GM13977 (cell line): ENCODE measurements at regions of chr20 and their contacts with region 1.

Region 1: DNA sequence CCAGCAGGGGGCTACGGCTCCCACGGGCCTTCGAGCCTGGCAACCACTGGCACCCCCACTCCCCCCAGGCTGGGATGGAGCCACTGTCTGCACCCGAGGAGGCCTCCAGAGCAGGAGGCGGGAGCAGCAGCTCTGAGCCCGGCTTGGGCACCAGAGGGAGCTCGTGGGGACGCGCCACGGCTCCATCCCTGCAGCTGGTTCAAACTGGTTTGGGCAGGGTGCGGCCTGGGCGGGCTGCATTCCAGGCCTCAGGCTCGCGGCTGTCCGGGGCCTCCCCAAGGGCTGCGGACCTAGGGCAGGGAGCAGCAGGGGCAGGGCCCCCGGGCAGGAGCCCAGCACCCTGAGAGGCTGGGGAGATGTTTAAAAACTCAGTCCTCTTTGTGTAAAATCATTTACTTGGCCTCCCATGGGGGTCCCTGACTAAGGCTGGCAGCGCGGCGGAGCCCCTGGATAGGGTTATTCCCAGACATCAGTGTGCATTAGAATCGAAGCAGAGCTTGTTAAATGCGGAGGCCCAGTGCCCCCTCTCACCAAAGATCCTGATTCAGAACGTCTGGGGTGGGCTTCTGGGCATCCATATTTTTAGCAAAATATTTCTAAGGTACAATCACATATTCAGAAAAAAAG is 4.1 kb upstream of the BCAS4 start:
- DNase-seq: peak; percentile 89
- CTCF ChIP-seq: peak; percentile 90

Region 2: DNA sequence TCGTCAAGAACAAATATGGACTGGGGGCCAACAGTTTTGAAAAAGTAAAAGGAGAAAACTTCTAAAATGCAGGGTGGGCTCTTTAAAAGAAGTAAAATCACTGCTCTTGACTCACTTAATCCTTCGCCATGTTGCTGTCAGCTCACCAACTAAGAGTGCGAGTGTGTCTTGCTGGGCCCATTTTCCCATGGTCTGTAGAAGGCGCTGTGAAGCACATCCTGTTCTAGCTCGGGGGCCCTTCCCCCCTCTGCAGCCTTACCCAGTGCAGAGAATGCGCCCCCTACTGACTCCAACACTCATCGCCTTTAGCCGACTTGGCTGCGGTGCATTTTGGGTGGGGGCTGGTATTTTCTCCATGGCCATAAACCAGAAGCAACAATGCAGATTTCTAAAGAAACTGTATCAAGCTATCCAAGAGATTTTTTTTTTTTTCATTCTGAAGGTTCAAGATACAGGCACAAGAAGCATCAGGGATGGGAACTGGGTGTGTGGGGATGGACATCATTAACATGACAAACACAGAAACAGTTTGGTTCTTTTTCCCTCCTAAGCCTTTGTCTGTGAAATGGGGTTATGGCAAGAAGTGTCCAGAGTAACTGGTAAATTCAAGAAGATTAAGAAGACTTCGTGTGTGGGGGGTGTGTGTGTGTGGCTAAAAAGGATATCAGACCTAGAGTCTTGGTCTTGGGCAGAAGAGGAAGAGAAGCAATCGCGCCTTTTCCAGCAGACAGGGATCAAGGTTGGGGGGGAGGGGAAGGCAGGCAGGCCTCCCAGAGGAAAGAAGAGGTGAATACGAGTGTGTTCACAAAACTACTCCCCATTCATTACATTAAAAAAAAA is 138.8 kb after region 1 on chr20:
- in situ Hi-C with region 1: loop called (anchors 10 kb)
- DNase-seq: peak; percentile 83
- CTCF ChIP-seq: peak; percentile 96

Region 3: DNA sequence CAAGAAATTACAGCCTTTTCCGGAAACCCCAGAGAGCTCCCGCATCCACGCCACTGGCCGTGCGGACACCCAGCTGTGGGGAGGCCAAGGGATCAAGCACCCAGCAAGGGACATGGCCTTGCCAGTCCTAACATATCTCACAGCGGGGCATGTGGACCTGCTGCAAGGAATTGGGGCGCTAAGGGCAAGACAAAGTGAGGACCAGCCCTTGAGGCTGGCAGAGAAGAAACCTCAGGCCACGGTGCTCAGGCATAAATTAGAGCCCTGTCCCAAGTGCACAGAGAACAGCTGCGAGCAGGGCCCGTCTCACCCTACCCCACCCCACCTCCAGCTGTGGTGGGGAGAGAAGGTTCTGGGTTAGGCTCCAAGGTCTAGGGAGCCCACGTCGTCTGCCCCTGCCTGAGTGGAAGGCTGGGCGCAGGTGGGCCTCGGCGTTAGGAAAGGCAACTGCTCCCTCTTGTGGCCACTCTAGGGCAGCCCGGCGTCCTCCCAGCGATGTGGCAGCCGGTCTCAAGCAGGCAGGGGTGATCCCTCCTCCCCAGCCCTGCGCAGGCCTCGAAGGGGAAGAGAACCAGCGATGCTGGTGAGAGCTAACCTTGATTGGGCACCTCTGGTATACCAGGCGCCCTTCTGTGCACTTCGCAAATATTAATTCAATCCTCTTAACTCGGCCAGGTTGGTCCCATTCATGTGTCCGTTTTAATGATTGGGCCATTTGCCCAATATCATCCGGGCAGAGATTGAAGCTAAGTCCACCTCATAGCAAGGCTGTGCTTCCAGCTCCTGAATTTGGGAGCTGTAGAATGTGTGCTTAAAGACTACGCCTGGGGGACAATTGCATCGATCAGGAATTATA is 516.0 kb after region 1 on chr20:
- in situ Hi-C with region 1: loop called (anchors 25 kb)
- DNase-seq: peak; percentile 83
- CTCF ChIP-seq: peak; percentile 96